Lower leg skin (tissue), 4 donors: ENCODE measurements at regions of chr11 and their contacts with region 1.

Region 1: GRCh38 chr11:30478923-30479322 is 107.2 kb downstream of the MPPED2 start:
- DNase-seq: peak in 1 of 2 donors; percentile 17
- H3K4me3 ChIP-seq: no peak overlapping the region
- CTCF ChIP-seq: no peak
- POLR2A ChIP-seq: no peak

Region 2: GRCh38 chr11:30545507-30545906 is 66.6 kb after region 1 on chr11:
- intact Hi-C with region 1: no loop called
- DNase-seq: no peak
- H3K4me3 ChIP-seq: no peak overlapping the region
- CTCF ChIP-seq: no peak
- POLR2A ChIP-seq: no peak

Region 3: GRCh38 chr11:31786996-31787685 is 1308.2 kb after region 1 on chr11:
- intact Hi-C with region 1: loop called (anchors 5 kb)
- DNase-seq: no peak
- H3K4me3 ChIP-seq: no peak overlapping the region
- CTCF ChIP-seq: no peak
- POLR2A ChIP-seq: no peak